Naive thymus-derived CD8-positive, alpha-beta T cell (primary cell): ENCODE measurements at regions of chr19 and their contacts with region 1.

Region 1: DNA sequence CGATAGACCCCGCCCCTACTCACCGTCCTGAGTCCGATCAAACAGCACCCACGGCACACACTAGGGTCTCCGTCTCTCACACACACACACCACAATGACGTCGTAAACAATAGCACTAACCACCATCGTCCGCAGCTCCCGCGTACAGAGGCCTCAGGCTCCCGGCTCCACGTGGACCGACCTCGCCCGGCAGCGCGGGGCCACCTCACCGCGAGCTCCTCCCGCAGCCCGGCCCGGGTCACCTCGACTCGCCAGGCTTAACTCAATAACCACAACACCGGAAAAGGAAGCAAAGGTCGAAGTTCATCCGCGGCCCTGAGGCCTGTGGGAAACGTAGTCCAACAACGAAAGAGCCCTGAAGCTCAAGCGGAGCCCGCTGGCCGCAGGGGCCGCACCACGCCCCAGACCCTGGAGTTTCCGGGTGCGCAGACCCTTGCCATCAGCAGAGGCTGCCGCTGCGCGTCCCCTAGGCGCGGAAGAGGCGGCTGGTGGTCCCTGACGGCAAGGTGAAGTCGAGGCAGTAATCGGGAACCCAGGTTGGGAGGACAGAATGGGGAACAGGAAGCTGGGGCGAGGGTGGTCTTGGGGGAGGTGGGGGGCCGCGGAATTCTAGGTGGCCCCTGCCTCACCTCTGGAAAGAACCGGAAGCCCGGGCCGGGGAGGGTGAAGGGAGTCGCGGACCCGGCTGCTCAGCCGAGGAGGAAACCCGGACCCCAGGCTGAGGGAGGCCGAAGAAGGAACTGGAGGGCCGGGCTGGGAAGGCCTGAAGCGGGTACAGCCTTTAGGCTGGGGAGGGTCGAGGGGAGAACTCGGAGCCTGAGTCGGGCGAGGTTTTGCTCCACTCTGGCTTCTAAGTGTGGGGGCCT is at the start of gene ZNF529:
- DNase-seq: peak; percentile 65 to 93 (median 88)
- ATAC-seq: peak; percentile 84 to 93
- H3K4me3 Mint-ChIP-seq: peak within 1 kb of the TSS; percentile 83 to 100 (median 94)
- H3K27ac Mint-ChIP-seq: peak within 1 kb of the TSS; percentile 96 to 100 (median 97)
- H3K4me1 Mint-ChIP-seq: peaks cover 25 to 48% (median 41%) of the 10 kb centered on the region in 4 donors
- H3K27me3 Mint-ChIP-seq: no peaks in the 10 kb centered on the region
- polyA plus RNA-seq, gene ZNF529: 8.0 to 10.6 (median 9.9) TPM

Region 2: GRCh38 chr19:36528194-36528920 is 44.9 kb before region 1 on chr19 and contains the start of gene ZNF260:
- POLR2A ChIA-PET with region 1: interaction called, 19 read pairs
- DNase-seq: peak; percentile 84 to 95 (median 90)
- ATAC-seq: peak; percentile 89
- H3K4me3 Mint-ChIP-seq: peak within 1 kb of the TSS; percentile 94 to 100 (median 98)
- H3K27ac Mint-ChIP-seq: peak within 1 kb of the TSS; percentile 93 to 99 (median 98)
- H3K4me1 Mint-ChIP-seq: peaks cover 19 to 32% (median 24%) of the 10 kb centered on the region in 4 donors
- H3K27me3 Mint-ChIP-seq: no peaks in the 10 kb centered on the region
- polyA plus RNA-seq, gene ZNF260: 5.5 to 9.8 (median 8.2) TPM

Region 3: DNA sequence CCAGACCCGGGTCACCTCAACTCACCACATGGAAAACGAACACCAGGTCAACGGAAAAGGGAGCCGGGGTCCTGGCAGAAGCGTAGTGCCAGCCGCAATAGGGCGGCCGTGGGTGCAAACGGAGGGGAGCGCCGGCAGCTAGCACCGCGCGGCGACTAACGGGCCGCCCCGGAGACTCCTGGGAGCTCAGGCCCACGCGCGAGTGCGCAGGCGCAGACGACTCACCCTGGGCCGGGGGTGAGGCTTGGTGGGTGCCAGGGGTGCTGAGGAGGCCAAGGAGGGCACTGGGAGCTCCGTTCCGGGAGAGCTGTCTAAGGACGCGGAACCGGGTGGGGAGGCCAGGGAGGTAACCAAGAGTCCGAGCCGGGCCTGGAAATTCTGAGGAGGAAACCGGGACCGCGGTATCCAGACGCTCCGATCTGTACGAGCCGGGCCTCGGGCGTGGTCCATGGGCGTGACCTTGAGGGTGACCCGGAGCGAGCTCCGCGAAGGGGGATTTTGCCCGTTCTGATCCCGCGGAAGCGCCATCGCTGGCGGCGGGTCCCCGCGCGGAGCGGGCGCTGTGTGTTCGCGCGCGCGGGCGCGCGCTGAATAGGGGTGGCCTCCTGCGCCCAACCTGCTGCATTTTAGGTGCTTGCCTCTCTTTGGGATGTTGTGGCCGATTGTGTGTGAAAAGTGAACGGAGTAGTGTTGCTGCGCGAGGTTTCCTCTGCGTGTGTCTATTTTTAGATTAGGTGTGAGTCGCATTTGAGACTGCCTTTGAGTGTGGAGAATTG is 32.0 kb after region 1 on chr19 and contains the start of gene ZNF382:
- POLR2A ChIA-PET with region 1: interaction called, 12 read pairs
- DNase-seq: peak; percentile 71 to 93 (median 83)
- ATAC-seq: peak; percentile 78 to 84
- H3K4me3 Mint-ChIP-seq: peak within 1 kb of the TSS; percentile 88 to 99 (median 96)
- H3K27ac Mint-ChIP-seq: peak within 1 kb of the TSS; percentile 86 to 98 (median 96)
- H3K4me1 Mint-ChIP-seq: peaks cover 16 to 31% (median 30%) of the 10 kb centered on the region in 4 donors
- H3K27me3 Mint-ChIP-seq: no peaks in the 10 kb centered on the region
- polyA plus RNA-seq, gene ZNF382: 3.3 to 7.9 (median 7.1) TPM